BJ (cell line): ENCODE measurements at regions of chr5 and their contacts with region 1.

Region 1: GRCh38 chr5:151447174-151448037 is at the start of gene SLC36A1:
- DNase-seq: peak; percentile 33
- H3K4me3 ChIP-seq: peak within 1 kb of the TSS; percentile 85
- H3K27me3 ChIP-seq: no peaks in the 10 kb centered on the region
- CTCF ChIP-seq: peak; percentile 96
- polyA plus RNA-seq, gene SLC36A1: 21.2 and 26.0 TPM in 2 replicates

Region 2: DNA sequence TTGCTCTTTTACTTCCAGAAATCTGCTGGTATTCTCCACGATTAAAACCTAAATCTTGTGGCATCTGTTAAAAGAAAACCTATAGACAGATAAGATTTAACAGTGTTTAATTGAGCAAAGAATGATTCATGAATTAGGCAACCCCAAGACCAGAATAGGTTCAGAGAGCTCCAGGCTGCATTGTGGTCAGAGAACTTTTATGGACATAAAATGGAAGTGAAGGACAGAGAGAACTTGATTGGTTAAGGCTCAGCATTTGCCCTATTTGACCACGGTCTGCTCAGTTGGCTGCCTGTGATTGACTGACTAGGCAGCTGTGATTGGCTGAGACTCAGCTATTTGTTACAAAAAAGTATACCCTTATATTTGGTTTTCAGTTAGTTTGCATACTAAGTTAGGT is 89.6 kb before region 1 on chr5:
- CTCF ChIA-PET with region 1: no interaction called
- POLR2A ChIA-PET with region 1: no interaction called
- DNase-seq: no peak
- H3K4me3 ChIP-seq: no peak overlapping the region
- H3K27me3 ChIP-seq: no peaks in the 10 kb centered on the region; the same call in 1 of the 2 replicates
- CTCF ChIP-seq: no peak

Region 3: DNA sequence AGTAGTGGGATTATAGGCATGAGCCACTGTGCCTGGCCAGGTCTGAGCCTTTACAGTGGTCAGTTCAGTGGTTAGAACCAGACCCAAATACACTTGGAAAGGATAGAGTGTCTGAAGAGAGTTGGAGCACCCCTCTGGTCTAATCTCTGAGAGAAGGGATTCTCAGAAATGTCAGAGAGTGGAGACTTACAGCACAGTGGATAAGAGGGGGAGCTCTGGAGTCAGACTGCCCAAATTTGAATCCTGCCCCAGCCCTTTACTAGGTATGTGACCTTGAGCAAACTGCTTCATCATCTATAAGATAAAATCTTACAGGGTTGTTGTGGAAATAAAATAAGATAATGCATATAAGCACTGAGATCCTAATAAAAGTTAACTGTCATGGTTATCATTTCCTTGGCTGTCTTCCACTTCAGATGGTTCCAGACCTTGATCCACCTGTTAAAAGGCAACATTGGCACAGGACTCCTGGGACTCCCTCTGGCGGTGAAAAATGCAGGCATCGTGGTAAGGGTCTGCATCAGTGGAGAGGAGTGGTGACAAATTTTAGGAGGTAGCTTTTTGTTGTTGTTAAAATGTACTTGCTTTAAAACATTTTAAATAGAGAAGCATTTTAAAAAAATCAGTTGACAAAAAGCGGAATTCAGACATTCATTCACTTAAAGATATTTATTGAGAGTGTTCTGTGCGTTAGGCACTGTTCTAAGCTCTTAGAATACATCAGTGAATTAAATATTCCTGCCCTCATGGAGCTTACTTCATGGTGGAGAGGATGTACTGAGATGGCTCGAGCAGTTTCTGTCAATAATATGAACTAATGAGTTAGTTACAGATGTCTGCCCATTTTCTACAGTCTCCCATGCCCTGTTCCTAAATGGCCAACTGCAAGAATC is 16.0 kb after region 1 on chr5:
- CTCF ChIA-PET with region 1: interaction called, 25 read pairs
- POLR2A ChIA-PET with region 1: no interaction called
- DNase-seq: no peak
- H3K4me3 ChIP-seq: no peak overlapping the region
- H3K27me3 ChIP-seq: no peaks in the 10 kb centered on the region
- CTCF ChIP-seq: peak; percentile 38

Region 4: DNA sequence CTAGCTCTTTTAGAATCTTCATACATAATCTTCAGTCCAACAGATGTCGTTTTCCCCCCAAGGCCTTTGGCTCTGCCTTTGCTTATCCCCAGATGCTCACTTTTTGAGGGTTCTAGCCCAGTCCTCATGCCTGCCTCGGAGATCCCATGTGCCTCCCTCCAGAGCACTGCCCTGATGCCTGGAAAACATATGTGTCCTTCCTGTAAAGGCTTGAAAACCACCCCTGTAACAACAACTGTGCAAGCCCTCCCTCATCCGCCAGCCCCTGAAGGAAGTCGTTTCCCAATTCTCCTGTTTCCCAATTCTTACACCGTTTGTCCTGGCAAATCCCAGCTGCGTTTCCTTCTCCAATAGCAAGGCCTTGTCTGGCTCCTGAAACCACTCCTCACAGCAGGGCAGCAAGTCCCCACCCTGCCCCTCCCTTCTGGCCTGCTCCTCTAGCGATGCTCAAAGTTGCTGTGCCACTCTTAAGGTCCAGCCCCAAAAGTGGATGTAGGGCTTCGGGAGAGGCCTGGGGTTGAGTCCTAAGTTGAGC is 52.2 kb after region 1 on chr5:
- CTCF ChIA-PET with region 1: interaction called, 38 read pairs
- POLR2A ChIA-PET with region 1: no interaction called
- DNase-seq: no peak
- H3K4me3 ChIP-seq: no peak overlapping the region
- H3K27me3 ChIP-seq: no peaks in the 10 kb centered on the region
- CTCF ChIP-seq: no peak

Region 5: GRCh38 chr5:151523335-151523734 is 75.9 kb after region 1 on chr5:
- CTCF ChIA-PET with region 1: interaction called, 16 read pairs
- POLR2A ChIA-PET with region 1: no interaction called
- DNase-seq: no peak
- H3K4me3 ChIP-seq: no peak overlapping the region
- H3K27me3 ChIP-seq: no peaks in the 10 kb centered on the region
- CTCF ChIP-seq: peak; percentile 65